GM10248 (cell line): ENCODE measurements at regions of chr2 and their contacts with region 1.

Region 1: GRCh38 chr2:138827426-138828054 is 47.4 kb upstream of the NXPH2 start:
- DNase-seq: peak; percentile 34
- CTCF ChIP-seq: peak; percentile 51

Region 2: DNA sequence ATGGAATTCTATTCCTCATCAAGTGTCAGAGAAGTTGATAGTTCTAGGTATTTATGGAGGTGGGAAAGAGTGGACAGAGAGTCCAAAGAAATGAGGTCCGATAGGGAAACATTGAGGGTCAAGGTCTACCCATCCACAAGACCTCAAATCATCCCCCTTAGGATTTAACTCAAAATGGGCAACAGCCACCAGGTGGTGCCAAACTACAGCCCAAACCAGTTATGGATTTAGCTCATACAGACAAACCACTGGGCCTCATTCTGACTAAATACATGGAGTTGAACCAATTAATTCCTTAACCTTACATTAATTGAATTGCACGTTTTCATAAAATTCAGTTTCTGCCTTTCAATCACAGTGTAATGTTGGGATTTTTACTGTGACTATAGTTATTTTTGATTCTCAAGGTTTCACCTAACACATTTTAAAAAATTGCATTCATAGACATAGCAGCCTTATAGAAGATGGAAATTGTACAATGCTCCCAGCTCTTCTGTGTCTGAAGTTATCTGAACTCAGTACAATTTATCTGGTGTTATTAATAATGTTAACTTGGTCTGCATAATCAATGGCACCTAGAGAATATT is 961.5 kb before region 1 on chr2:
- CTCF ChIA-PET with region 1: interaction called, 21 read pairs
- POLR2A ChIA-PET with region 1: no interaction called
- DNase-seq: no peak
- CTCF ChIP-seq: peak; percentile 61

Region 3: DNA sequence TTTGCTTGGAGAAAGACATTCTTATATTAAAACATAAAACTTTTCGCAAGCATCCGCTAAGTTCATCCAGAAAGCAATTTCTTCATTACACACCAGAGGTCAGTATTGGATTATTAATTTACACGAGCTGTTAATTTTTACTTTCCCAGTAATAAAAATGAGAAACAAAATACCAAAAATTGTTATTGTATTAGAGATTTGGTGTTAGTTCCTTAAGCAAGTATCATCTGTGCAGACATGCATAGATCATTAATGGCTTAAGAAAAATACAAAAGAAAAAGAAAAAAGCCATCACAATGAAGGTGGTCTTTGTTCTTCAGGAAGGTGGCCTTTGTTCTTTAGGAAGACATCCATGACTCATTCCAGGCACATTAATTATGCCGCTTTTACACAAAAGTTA is 916.9 kb before region 1 on chr2:
- CTCF ChIA-PET with region 1: interaction called, 65 read pairs
- POLR2A ChIA-PET with region 1: no interaction called
- DNase-seq: no peak
- CTCF ChIP-seq: peak; percentile 36

Region 4: DNA sequence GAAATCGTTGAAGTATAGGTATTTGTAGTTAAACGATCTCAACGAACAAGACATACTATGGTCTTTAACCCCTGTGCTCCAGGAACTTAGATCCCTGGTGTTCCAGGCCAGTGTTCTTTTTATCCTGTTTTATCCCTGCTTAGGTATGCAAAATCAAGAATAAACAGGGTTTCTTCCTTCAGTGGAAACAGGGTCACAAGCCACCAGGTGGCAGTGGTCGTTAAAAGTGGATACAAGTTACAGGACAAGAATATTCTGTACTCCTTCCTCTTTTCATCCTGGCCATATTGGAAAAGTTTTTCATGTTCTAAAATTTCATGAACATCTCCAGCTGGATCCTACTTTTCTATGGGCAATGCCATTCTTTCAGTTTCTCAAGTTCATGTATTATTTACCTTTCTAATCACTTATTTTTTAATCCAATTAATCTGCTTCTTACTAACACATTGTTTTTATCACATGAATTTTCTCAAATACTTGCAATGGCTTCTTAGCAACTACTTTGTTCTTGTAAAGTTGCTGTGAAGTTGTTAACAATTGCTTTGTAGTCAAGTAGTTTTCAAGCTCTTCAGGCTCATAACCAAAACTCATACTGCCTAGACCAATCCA is 879.7 kb before region 1 on chr2:
- CTCF ChIA-PET with region 1: interaction called, 12 read pairs
- POLR2A ChIA-PET with region 1: no interaction called
- DNase-seq: peak; percentile 19
- CTCF ChIP-seq: peak; percentile 45

Region 5: GRCh38 chr2:138814120-138814898 is 13.2 kb before region 1 on chr2:
- CTCF ChIA-PET with region 1: interaction called, 19 read pairs
- POLR2A ChIA-PET with region 1: no interaction called
- DNase-seq: no peak
- CTCF ChIP-seq: no peak

Region 6: DNA sequence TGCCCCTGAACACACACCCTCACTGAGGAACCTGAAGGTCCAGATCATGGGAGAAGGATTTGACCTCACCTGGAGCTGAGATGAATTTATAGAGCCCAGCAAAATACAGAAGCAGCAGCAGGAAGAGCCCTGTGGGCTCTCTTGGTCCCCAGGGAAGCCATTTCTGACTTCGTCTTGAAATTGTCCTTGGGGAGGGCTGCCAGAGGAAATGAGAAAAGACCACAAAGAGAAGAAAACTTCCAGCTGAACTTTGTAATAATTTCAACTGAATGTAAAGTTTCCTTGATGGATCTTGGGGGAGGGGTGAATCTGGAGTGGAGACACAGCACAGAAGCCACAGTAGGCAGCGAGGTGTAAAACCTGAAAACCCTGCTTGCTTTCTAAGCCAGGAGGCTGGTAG is 453.6 kb after region 1 on chr2:
- CTCF ChIA-PET with region 1: no interaction called
- POLR2A ChIA-PET with region 1: no interaction called
- DNase-seq: no peak
- CTCF ChIP-seq: no peak